ENCODE measurements at regions of chr4 and their contacts with region 1.

Region 1: DNA sequence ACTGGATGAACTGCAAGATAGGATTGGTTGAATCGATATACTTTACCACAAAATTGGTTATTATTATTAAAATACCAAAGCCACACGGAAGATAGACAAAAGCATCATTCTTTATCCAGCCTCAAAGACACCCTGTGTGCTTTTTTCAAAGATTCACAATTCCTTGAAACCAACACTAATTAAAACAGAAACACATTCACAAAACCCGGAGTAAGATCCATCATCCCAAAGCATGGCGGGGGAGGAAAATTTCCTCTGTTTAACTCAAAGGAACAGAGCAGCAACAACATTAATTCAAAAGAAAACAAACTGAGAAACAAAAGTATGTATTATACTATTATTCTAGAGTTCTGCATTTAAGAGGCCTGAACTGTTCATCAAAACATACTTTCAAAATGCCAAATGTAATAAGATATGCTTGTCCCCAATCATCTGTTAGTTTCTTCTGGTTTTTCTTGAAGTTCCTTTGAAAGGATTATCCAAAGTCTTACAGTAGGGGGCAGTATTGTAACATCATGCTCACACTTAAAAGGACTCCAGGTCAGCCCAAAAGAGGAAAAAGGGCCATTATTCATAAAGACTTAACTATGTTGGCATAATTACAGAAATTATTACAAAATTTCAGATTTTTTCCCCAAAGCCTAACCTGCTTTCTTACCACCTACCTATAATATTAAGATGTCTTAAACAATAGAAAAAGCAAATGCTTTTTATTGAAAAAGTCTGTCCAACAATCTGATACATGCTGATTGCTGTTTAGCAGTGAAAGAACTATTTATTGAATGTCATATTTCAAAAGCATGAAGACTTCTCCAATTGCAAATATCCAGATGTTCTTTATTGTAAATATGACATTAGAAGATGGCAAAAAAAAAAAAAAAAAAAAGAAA is 168.7 kb downstream of the SCFD2 start:
- DNase-seq: no peak
- ATAC-seq: peak; percentile 57

Region 2: GRCh38 chr4:52358883-52359321 is 838.2 kb before region 1 on chr4:
- intact Hi-C with region 1: no loop called
- DNase-seq: no peak
- ATAC-seq: peak; percentile 91

Region 3: DNA sequence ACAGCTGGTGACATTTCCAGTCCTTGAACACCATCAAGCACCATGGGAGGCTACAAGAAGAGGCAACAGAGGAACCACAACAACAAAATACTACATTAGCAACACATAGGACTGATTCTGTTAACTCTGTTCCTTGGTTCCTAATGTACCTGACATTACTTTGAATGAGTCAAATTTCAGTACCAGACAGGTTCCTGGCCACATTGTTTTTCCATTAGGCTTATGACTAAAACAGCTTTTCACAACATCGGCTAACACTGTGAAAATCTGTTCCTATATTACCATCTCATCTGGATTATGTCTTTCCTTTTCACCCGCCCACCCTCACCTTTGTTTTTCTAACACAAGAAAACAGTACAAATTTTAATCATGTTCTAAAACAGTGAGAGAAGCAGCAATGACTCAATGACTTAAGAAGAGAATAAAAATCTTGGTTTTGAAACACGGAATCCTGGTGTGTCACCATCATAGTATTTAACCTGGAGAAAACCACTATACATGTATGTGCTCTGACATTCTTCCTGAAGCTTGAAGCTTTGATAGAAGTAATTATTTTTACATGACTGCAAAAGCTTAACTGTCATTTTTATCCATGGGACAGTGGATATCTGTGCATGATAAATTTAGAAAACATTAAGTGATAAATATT is 24.8 kb after region 1 on chr4:
- intact Hi-C with region 1: no loop called
- DNase-seq: no peak
- ATAC-seq: no peak

Region 4: GRCh38 chr4:53622739-53623151 is 425.6 kb after region 1 on chr4:
- intact Hi-C with region 1: no loop called
- DNase-seq: no peak
- ATAC-seq: no peak

Region 5: DNA sequence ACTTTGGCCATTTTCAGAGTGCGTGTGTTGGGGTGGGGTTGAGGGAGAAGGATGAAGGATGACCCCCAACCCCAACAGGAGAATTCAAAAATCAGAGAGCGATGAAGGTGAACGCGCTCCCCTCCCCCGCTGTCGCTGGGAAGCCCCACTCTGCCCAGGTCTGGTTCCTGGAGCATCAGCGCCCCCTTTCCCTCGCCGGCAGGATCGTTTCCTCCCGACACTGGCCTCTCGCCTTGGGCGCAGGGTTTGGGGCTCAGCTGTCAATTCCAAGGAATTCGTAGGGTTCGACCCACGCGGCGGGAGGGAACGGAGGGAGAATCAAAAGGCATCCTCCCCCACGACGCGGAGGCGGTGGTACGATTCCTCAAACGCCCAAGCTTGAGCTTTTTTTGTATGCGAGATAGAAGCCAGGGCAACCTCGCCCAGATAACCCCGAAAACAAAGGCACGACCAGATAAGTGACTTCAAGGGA is 1031.0 kb after region 1 on chr4:
- intact Hi-C with region 1: loop called (anchors 5 kb)
- DNase-seq: peak; percentile 78
- ATAC-seq: peak; percentile 65